Head of caudate nucleus (tissue), 42 donors: ENCODE measurements at regions of chr2 and their contacts with region 1.

Region 1: GRCh38 chr2:231463698-231464575 is at the start of gene NCL:
- DNase-seq: peak; percentile 32 to 99 (median 73)

Region 2: DNA sequence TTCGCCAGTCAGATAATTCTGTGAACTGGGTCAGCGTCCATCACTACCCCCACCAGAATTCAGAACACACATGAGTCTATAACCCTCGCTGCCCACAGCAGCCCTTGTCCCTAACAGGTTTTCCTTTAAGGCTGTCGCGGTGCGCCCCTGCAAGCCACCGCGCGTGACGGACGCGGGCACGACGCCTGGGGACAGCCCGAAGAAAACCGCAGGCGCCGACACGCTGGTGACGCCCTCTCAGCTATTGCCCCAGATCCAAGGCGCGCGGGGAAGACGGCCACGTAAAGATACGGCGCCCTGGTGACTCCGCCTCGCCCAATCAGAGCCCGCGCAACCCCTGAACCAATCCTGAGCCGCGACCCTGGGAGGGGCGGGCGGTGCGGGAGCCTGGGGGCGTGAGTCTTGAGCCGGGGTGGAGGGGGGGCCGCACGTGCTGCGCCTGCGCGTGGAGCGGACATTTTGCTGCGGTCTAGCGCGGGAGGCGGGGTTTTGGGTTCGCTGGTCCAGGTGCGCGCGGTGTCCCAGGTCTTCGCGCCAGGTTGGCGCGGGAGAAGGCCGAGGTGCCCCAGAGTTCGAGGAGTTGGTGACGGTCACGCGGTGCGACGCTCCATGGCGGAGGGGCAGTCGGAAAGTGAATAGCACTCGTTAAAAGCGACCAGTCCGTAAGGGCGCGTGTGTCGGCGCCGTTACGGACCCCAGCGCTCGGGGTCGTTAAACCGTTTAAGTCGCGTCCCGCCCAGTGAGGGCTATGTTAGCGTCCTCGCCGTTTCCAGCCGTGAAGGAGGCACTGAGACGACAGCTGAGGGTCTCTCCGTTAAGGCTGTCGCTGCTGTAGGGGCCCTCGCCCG is 50.4 kb after region 1 on chr2:
- intact Hi-C with region 1: loop called (anchors 2 kb)
- DNase-seq: peak; percentile 97 to 99 (median 98)

Region 3: DNA sequence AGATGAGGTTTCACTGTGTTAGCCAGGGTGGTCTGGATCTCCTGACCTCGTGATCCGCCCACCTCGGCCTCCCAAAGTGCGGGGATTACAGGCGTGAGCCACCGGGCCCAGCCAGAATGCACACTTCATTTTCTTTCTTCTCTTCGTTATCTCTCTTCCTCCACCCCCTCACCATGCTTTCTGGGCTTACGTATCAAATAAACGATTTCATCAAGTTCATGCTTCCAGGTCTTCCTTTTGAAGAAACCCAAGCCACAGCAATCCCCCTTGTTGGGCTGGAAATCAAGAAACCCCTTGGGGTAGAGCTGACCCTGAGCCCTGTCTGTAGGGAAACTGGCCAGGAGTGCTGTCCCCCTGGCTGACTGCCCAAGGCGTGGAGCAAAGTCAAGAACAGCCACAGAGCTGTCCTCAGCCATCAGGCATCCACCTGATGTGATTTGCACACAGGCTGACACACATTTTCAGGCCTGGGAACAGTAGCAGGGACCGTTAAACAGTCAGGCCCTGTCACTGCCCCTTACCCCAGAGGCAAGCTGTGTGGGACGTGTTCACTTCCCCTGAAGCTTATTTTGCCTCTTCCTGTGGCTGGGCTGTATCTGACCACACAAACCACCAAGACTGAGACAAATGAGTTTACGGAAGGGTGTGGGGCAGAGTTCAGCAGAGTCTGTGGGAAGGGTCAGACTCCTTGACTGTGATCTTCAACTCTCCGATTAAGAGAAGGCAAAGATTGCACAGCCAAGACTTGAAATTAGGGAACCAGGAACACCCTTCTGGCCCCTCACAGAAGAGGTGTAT is 81.4 kb after region 1 on chr2:
- intact Hi-C with region 1: no loop called
- DNase-seq: peak in 30 of 42 donors; percentile 7 to 64 (median 33)